ENCODE measurements at regions of chr9 and their contacts with region 1.

Region 1: GRCh38 chr9:136093995-136094881 is 851 bp downstream of the NACC2 start:
- DNase-seq: peak; percentile 75
- ATAC-seq: peak; percentile 55
- H3K4me3 Mint-ChIP-seq: peak overlapping the region; percentile 82
- H3K27ac Mint-ChIP-seq: peak overlapping the region; percentile 77
- H3K4me1 Mint-ChIP-seq: peaks cover 6% of the 10 kb centered on the region
- H3K27me3 Mint-ChIP-seq: peaks cover 4% of the 10 kb centered on the region

Region 2: DNA sequence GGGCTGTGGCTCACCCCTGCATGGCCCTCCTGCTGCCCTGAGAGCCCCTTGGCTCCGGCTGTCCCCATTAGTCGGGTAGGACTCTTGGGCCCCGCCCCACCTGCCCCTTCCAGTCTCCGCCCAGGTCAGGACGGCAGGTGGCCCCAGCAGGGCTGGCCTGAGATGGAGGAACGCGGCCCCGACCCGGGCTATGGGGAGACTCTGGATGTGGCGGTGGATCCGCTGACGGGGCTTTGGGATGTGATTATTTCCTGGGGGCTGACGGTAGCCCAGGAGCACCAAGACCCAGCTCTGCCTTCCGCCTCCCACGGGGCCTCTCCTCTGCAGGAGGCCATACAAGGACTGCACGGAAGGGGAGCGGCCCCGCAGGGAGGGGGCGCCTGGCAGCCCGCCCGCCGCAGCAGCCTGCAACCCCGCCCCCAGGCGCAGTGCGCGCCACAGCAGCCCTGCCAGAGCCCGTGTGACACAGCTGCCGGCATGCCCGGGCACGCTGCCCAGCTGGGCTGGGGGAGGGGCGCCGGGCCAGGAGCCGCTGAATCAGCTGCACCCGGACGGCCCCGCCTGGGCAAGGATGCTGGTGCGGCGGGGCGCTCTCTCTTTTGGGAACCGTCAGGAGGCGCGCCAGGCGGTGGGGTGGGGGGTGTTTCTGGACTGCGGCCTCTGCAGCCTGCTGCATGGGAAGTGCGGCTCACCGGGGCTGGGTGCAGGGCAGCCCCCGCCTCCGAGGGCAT is 15.3 kb after region 1 on chr9:
- POLR2A ChIA-PET with region 1: interaction called, 164 read pairs
- DNase-seq: peak; percentile 95
- ATAC-seq: peak; percentile 81
- H3K4me3 Mint-ChIP-seq: peak overlapping the region; percentile 93
- H3K27ac Mint-ChIP-seq: peak overlapping the region; percentile 94
- H3K4me1 Mint-ChIP-seq: peaks cover 42% of the 10 kb centered on the region
- H3K27me3 Mint-ChIP-seq: no peaks in the 10 kb centered on the region

Region 3: DNA sequence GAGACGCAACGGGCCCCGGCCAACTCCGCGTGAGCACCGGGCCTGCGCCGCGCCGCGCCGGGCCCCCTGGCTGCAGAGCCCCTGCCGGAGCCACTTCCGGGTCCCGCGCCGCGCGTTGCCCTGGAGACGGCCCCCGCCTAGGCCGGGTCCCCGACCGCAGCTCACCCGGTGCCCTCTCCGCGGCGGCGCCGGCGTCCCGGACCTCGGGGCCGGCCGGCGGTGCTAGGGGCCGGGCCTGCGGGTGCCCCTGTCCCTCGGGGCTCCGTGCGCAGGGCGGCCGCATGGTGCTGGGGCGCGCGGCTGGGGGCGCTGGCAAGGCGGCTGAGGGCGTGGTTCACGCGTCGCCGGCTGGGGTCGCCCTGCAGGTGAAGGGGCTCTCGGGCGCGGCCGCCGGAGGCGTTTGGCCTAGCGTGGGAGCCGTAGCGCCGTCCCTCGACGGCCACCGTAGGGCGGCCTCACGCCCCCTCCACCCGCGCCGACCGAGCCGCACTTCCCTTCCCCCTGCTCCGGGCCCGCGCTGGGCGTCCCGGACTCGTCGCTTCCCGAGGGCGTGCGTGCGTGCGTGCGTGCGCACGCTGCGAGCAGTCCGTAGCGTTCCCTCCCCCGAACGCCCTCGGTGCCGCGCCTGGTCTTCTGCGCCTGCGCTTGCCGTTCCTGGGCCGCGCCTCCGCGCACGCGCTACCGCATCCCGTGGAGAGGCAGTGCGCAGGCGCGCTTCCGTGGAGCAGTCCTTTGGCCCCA is 24.3 kb after region 1 on chr9 and contains the start of gene TMEM250:
- POLR2A ChIA-PET with region 1: interaction called, 164 read pairs
- DNase-seq: peak; percentile 98
- ATAC-seq: peak; percentile 88
- H3K4me3 Mint-ChIP-seq: peak within 1 kb of the TSS; percentile 83
- H3K27ac Mint-ChIP-seq: peak within 1 kb of the TSS; percentile 81
- H3K4me1 Mint-ChIP-seq: peaks cover 14% of the 10 kb centered on the region
- H3K27me3 Mint-ChIP-seq: no peaks in the 10 kb centered on the region
- total RNA-seq, gene TMEM250: 45.3 to 45.9 TPM

Region 4: GRCh38 chr9:136211441-136212344 is 117.5 kb after region 1 on chr9:
- POLR2A ChIA-PET with region 1: no interaction called
- DNase-seq: no peak
- ATAC-seq: no peak
- H3K4me3 Mint-ChIP-seq: no peak overlapping the region
- H3K27ac Mint-ChIP-seq: no peak overlapping the region
- H3K4me1 Mint-ChIP-seq: no peaks in the 10 kb centered on the region
- H3K27me3 Mint-ChIP-seq: no peaks in the 10 kb centered on the region

Region 5: GRCh38 chr9:136275655-136276429 is 181.6 kb after region 1 on chr9:
- POLR2A ChIA-PET with region 1: no interaction called
- DNase-seq: no peak
- ATAC-seq: no peak
- H3K4me3 Mint-ChIP-seq: no peak overlapping the region
- H3K27ac Mint-ChIP-seq: no peak overlapping the region
- H3K4me1 Mint-ChIP-seq: no peaks in the 10 kb centered on the region
- H3K27me3 Mint-ChIP-seq: no peaks in the 10 kb centered on the region

Measured in activated naive CD8-positive, alpha-beta T cell treated with anti-CD3 and anti-CD28 coated beads, Interleukin-2, amount 10 ng/mL, durations not matched to agents 7 days and 5 days (primary cell).